Dorsolateral prefrontal cortex (tissue), 120 donors: ENCODE measurements at regions of chr1 and their contacts with region 1.

Region 1: GRCh38 chr1:27300341-27301051 is 21.5 kb upstream of the TMEM222 start:
- DNase-seq: peak; percentile 71 to 91 (median 86)
- H3K4me3 ChIP-seq: no peak overlapping the region
- H3K27ac ChIP-seq: peak overlapping the region in 58 of 59 donors; percentile 27 to 97 (median 85)
- H3K27me3 ChIP-seq: no peaks in the 10 kb centered on the region
- CTCF ChIP-seq: peak; percentile 83 to 100 (median 99)

Region 2: GRCh38 chr1:27111626-27112573 is 188.6 kb before region 1 on chr1:
- intact Hi-C with region 1: no loop called
- DNase-seq: peak in 9 of 10 donors; percentile 39 to 85 (median 70)
- H3K4me3 ChIP-seq: no peak overlapping the region
- H3K27ac ChIP-seq: peak overlapping the region in 48 of 59 donors; percentile 4 to 90 (median 48)
- H3K27me3 ChIP-seq: no peaks in the 10 kb centered on the region
- CTCF ChIP-seq: peak in 14 of 56 donors; percentile 6 to 39 (median 20)

Region 3: DNA sequence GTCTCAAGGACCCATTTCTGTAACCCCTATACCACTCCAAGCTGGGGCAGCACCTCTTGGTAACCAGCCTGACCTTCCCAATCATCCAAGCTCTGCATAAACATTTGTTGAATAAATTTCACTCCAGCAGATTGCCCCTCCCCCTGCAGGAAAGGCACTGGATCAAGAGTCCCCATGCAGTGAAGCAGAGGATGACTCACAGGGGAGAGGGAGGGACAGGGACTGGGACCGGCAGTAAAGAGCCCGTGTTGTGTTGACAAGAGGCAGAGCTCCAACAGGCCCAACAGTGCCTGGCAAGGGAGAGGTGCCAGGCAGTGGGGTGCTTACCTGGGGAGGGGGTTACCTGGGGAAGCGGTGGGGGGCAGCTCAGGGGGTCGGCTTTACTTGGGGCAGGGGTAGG is 177.8 kb before region 1 on chr1:
- intact Hi-C with region 1: no loop called
- DNase-seq: peak in 8 of 10 donors; percentile 58 to 90 (median 74)
- H3K4me3 ChIP-seq: no peak overlapping the region
- H3K27ac ChIP-seq: peak overlapping the region in 57 of 59 donors; percentile 26 to 91 (median 76)
- H3K27me3 ChIP-seq: no peaks in the 10 kb centered on the region
- CTCF ChIP-seq: peak in 1 of 56 donors; percentile 18

Region 4: DNA sequence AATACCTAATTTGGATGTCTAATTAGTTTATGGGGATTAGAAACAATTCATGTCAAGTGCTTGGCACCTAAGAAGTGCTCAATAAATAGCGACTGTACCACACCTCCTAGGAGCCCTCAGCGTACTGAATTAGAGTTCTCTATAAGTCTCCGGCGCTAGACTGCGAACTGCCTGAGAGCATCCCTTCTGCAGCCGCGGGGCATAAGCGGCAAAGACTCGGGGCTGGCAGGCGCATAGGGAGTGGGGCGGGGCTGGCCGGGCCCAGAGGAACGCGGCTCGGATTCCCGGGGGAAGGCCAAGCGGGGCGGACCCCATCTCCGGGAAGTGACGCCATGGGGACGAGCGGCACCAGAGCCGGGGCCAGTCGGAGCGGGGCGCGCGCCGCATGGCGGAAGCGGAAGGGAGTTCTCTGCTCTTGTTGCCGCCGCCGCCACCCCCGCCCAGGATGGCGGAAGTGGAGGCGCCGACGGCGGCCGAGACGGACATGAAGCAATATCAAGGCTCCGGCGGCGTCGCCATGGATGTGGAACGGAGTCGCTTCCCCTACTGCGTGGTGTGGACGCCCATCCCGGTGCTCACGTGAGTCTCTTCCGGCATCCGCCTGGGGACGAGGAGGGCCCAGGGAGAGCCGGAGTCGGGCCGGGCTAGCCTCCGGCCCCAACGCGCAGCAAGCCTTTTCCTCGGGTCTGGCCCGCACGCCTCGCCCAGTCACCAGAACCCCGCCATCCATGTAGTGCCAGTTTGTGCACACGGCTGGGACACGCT is 21.5 kb after region 1 on chr1 and contains the start of gene TMEM222:
- intact Hi-C with region 1: loop called in 1 of 2 experiments (anchors 1 kb)
- DNase-seq: peak; percentile 94 to 100 (median 98)
- H3K4me3 ChIP-seq: peak within 1 kb of the TSS; percentile 63 to 100 (median 94)
- H3K27ac ChIP-seq: peak within 1 kb of the TSS in 58 of 59 donors; percentile 23 to 97 (median 86)
- H3K27me3 ChIP-seq: no peaks in the 10 kb centered on the region
- CTCF ChIP-seq: peak in 50 of 56 donors; percentile 20 to 75 (median 44)
- total RNA-seq, gene TMEM222: 37.6 to 69.9 (median 51.8) TPM

Region 5: DNA sequence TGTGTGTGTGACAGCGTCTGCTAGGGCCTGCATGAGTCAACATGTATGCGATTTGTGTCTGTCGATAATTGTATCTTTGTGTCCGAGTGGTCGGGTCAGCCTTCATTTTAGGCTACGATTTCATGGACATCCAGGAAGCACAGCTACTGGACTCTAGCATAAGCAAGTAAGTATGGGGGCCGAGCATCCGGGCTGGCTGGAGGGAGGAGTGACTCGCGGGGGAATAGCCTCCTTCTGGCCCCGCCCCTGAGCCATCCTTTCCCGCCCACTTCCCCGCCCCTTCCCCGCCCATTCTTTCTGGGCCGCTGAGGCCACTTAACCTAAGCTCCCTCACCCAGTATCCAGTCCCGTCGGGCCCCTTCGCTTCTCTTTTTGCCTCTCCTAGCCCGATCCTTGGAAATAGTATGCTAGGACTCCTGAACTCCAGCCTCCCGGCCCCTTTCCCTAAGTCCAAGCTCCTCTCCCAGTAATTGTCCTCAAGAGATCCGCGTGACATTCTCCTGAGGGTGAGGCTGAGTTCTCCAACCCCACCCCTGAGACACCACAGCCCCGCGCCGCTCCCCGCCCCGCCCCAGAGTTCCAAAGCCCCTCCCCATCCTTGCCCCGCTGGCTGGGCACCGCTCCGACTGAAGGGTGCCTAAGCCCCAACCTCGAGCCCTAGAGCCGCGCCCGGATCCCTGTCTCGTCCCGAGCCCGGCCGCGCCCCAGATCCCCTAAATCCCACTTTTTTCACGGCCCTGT is 65.0 kb after region 1 on chr1:
- intact Hi-C with region 1: no loop called
- DNase-seq: peak; percentile 58 to 89 (median 83)
- H3K4me3 ChIP-seq: peak overlapping the region; percentile 49 to 85 (median 70)
- H3K27ac ChIP-seq: peak overlapping the region in 56 of 59 donors; percentile 31 to 97 (median 82)
- H3K27me3 ChIP-seq: no peaks in the 10 kb centered on the region
- CTCF ChIP-seq: peak in 2 of 56 donors; percentile 10 to 20